ENCODE measurements at regions of chr9 and their contacts with region 1.

Region 1: DNA sequence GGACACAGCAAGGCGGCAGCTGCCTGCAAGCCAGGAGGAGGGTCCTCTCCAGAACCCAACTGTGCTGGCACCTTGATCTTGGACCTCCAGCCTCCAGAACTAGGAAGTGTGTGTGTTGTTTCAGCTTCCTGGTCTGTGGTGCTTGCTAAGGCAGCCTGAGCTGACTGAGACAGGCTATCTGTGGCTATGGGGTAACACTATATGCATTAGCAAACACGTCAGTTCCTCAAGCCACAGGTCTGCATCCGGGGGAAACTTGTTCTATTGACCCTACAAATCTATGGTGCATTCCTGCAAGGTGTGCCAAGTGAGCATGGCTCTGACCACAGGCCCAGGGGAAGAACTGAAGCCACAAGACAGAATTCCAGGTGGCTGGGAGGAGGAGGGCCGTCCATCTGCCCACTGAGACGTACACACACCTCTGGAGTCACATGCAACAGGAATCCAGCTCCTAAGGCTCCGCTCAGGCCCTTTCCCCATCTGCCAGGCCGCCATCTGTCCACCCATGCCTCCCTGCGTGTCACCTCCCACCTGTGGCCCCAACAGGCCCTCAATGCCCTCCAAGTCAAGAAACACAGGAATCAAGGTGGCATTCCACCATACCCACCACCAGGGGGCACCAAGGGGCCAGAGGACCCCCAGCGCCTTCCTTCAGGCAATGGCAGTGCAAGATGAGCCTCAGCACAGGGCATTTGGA is 174.9 kb downstream of the ROR2 start:
- DNase-seq: peak; percentile 89
- H3K4me3 Mint-ChIP-seq: no peak overlapping the region
- H3K27ac Mint-ChIP-seq: no peak overlapping the region
- H3K4me1 Mint-ChIP-seq: peaks cover 2% of the 10 kb centered on the region
- H3K27me3 Mint-ChIP-seq: peaks cover 25% of the 10 kb centered on the region

Region 2: GRCh38 chr9:91560285-91560684 is 214.9 kb before region 1 on chr9:
- intact Hi-C with region 1: no loop called
- DNase-seq: no peak
- H3K4me3 Mint-ChIP-seq: no peak overlapping the region
- H3K27ac Mint-ChIP-seq: no peak overlapping the region
- H3K4me1 Mint-ChIP-seq: no peaks in the 10 kb centered on the region
- H3K27me3 Mint-ChIP-seq: peaks cover 40% of the 10 kb centered on the region

Region 3: GRCh38 chr9:91639054-91639453 is 136.1 kb before region 1 on chr9:
- intact Hi-C with region 1: no loop called
- DNase-seq: no peak
- H3K4me3 Mint-ChIP-seq: no peak overlapping the region
- H3K27ac Mint-ChIP-seq: no peak overlapping the region
- H3K4me1 Mint-ChIP-seq: peaks cover 2% of the 10 kb centered on the region
- H3K27me3 Mint-ChIP-seq: peaks cover 23% of the 10 kb centered on the region

Region 4: DNA sequence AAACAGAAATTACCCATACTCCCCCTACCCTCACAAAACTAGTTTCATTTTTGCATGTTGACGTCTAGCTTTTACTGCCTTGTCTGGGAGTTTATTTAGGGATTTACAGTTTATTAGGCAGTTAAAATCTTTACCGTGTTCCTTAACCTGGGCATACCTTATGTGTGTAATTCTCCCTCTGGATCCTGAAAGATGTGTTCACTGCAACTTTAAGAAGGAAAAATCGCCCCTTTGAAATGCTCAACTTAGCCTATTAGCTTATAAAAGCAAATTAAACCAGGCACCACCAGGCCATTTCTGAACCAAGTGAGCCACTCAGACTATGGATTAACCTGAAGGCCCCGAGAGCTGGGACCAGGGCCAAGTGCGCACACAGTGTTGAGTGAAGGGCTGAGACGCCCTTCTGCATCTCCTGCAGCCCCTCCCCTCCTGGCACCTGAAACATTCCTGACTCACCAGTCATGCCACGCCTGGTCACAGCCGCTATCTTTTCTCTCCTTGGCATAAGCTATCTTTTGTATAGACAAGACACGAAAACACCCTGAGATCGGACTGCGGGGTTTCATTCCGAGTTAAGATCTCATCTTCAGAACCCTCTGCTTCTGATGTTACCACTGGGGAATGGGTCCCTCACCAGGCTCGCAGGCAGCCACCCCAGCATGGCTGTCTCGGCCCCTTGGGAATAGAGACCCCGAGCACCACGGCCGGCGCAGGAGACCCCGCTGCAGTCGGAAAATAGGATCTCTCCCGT is 63.0 kb after region 1 on chr9:
- intact Hi-C with region 1: no loop called
- DNase-seq: no peak
- H3K4me3 Mint-ChIP-seq: no peak overlapping the region
- H3K27ac Mint-ChIP-seq: no peak overlapping the region
- H3K4me1 Mint-ChIP-seq: peaks cover 7% of the 10 kb centered on the region
- H3K27me3 Mint-ChIP-seq: peaks cover 9% of the 10 kb centered on the region

Region 5: DNA sequence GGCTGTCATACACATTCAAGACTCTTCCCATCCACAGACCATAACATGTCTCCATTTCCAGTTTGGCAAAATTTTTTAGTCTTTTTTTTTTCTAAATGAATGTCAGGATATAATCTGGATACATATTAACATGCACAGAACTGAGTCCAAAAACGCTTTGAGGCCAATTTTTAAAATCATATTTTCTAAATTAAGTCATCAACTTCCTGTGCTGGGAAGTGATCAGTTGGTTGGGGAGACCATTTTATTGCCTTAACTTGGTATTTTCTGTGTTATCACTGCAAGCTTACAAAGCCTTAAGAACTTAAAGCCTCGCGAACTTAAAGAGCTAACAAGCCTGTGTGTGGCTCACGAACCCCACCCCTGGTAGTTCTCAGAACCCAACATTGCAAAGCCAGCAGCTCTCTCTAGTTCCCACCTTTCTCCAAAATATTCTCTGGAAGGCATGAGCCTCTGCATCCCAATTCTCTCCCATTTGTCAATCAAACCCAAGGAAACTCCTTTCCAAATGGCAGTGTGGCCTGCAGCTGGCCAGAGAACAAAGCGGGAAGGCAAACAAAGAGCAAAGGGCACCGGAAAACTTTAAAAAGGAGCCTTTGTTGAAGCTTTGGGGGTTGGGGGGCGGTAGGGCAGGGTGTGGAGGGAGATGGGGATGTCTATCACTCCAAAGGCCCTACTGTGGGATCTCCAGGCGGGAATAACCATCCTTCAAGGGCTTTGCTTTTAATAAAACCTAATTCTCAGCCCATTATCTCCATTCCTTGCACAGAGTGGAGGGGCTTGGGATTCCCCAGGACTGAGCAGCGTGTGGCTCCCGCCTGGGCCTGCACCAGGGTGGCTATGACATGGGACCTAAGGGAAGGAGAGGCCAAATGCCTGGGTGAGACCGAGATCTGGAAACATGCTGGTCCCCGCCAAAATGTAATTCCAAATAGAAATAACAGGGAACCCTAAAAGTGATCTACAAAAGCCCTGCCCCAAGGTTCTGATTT is 109.8 kb after region 1 on chr9:
- intact Hi-C with region 1: loop called (anchors 10 kb)
- DNase-seq: no peak
- H3K4me3 Mint-ChIP-seq: no peak overlapping the region
- H3K27ac Mint-ChIP-seq: no peak overlapping the region
- H3K4me1 Mint-ChIP-seq: no peaks in the 10 kb centered on the region
- H3K27me3 Mint-ChIP-seq: peaks cover 41% of the 10 kb centered on the region

Region 6: DNA sequence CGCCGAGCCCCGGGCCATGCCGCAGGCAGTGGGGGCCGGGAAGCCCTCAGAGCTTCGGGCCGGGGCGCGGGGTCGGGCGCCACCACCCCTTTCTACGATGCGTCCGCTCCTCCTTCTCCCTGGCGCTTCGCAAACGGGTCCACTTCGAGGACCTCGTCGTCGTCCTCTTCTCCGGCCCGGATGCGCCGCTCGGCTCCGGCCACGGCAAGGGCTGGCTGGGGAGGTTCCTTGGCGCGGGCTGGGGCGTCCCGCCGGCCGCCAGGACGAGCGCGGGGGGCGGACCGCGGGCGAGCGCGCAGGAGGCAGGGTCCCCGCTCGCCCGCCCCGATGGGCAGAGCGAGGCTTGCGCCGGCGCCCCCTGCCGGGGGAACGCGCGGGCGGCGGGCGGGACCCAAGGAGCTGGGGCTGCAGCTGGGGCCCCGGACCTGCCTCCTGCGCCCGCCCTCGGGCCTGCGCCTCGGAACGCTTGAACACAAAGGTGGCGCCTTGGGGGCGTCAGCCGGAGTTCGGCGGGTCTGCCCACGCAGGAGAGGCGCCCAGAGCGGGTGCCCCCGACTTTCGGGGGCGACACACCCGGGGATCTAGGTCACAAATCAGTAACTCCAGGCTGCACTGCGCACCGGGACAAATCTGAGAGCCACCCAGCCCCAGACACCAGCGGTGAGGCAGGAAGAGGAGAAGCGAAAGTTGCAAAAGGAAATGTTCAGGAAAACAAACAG is 174.9 kb after region 1 on chr9 and contains the start of gene ROR2:
- intact Hi-C with region 1: loop called (anchors 1 kb)
- DNase-seq: peak; percentile 93
- H3K4me3 Mint-ChIP-seq: peak within 1 kb of the TSS; percentile 80
- H3K27ac Mint-ChIP-seq: no peak within 1 kb of the TSS
- H3K4me1 Mint-ChIP-seq: peaks cover 8% of the 10 kb centered on the region
- H3K27me3 Mint-ChIP-seq: peaks cover 68% of the 10 kb centered on the region
- total RNA-seq, gene ROR2: 0.40 and 0.43 TPM in 2 replicates

Region 7: DNA sequence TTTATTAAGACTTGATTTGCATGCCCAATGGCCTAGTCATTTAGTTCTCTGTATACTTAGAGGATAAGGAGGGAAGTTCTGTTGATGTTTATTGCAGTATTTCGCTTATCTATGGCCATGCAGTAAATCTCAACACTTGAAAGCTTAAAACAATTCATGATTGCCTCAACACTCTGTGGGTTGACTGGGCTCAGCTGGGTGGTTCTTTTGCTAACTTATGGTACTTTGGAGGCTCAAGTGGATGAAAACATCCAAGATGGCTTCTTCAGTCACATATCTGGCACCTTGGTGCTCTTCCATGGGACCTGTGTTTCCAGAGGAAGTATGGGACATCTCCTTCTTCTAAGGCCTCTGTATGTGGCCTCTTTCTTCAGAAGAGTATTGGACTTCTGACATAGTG is 185.2 kb after region 1 on chr9:
- intact Hi-C with region 1: no loop called
- DNase-seq: no peak
- H3K4me3 Mint-ChIP-seq: no peak overlapping the region
- H3K27ac Mint-ChIP-seq: no peak overlapping the region
- H3K4me1 Mint-ChIP-seq: no peaks in the 10 kb centered on the region
- H3K27me3 Mint-ChIP-seq: peaks cover 3% of the 10 kb centered on the region

Measured in activated CD4-positive, alpha-beta T cell treated with anti-CD3 and anti-CD28 coated beads, Interleukin-2, amount 10 ng/mL, durations not matched to agents 24 days and 14 days (primary cell).